Natural killer cell (primary cell): ENCODE measurements at regions of chr19 and their contacts with region 1.

Region 1: GRCh38 chr19:13952154-13953035 is at the start of gene DCAF15:
- DNase-seq: peak; percentile 98 to 99
- ATAC-seq: peak; percentile 94 to 99 (median 95)
- H3K4me3 ChIP-seq: peak within 1 kb of the TSS; percentile 54
- H3K4me3 Mint-ChIP-seq: peak within 1 kb of the TSS; percentile 98
- H3K27ac ChIP-seq: peak within 1 kb of the TSS; percentile 51
- H3K27ac Mint-ChIP-seq: peak within 1 kb of the TSS; percentile 95 to 97
- H3K4me1 ChIP-seq: peaks cover 24% of the 10 kb centered on the region
- H3K4me1 Mint-ChIP-seq: peaks cover 7 to 27% of the 10 kb centered on the region in 2 donors
- H3K27me3 ChIP-seq: no peaks in the 10 kb centered on the region
- H3K27me3 Mint-ChIP-seq: no peaks in the 10 kb centered on the region
- CTCF ChIP-seq: no peak
- total RNA-seq, gene DCAF15: 121 to 149 (median 124) TPM

Region 2: DNA sequence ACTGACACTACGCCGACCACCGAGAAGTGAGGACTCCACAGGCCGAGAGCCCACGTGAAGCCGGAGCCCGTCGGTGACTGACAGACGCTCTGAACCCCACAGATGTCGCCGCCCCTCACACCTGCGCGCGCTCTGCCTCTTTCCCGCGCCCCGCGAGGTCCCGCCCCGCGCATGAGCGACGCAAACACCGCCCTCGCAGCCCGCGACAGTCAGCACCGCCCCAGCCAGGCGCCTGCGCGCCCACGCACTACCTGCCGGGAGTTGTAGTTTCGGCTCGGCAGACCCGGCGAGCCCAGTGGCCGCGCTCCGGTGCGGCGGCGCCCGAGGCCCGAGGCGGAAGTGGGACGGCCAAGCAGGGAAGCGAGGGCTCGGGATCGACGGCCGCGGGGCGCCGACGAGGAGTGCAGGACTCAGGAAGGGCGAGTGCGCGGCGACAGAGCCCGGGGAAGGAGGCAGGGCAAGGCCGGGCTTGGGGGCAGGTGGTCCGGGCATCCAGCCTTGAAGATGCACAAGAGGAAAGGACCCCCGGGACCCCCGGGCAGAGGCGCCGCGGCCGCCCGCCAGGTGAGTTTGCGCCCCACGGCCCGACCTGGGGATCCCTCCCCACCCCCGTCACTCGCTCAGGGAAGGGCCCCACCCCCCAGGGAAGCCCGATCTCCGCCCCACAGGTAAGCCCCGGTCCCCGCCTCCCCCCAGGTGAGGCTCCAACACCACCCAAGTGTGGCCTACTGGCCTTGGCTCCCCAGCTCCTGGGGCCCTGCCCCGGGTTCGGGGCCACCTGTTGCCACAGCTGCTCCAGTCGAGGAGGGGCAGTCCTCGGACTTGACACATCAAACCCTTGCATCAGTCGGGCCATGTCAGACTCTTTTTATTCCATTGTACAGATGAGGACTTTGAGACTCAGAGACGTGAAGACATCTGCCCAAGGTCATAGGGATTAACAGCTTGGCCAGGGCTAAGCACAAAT is 46.2 kb before region 1 on chr19 and contains the starts of genes BRME1 and CC2D1A:
- intact Hi-C with region 1: loop called (anchors 2 kb)
- DNase-seq: peak; percentile 91 to 96
- ATAC-seq: peak; percentile 99
- H3K4me3 ChIP-seq: peak within 1 kb of the TSS; percentile 79
- H3K4me3 Mint-ChIP-seq: peak within 1 kb of the TSS; percentile 92
- H3K27ac ChIP-seq: peak within 1 kb of the TSS; percentile 65
- H3K27ac Mint-ChIP-seq: peak within 1 kb of the TSS; percentile 83 to 95
- H3K4me1 ChIP-seq: peaks cover 23% of the 10 kb centered on the region
- H3K4me1 Mint-ChIP-seq: peaks cover 13 to 15% of the 10 kb centered on the region in 2 donors
- H3K27me3 ChIP-seq: no peaks in the 10 kb centered on the region
- H3K27me3 Mint-ChIP-seq: no peaks in the 10 kb centered on the region
- CTCF ChIP-seq: no peak
- total RNA-seq, gene BRME1: 3.8 to 7.7 (median 4.0) TPM
- total RNA-seq, gene CC2D1A: 42.8 to 49.3 (median 48.4) TPM

Region 3: DNA sequence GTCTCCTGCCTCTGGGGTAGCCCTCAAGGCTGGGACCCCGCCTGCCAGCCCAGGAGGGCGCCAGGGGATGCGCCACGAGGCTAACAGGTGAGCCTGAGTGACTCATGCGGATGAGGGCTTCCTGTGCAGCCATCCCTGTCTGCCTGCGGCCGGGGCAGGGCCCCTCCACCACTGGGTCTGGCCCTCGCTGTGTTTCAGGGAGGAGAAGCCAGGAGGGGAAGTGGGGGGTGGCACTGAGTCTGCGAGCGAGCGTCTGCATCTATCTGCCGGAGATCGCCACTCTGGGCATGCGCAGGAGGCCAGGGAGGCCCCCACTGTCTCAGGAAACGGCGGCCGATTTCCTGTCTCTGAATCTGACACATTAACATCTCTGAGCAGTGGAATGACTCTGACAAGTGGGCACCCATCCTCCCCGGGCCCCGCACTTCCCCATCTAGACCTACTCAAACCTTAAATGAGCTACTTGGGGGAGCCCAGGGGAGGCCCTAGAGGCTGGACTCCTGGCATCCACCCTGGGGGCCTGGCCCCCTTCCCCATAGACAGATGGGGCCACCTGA is 34.0 kb after region 1 on chr19:
- intact Hi-C with region 1: loop called (anchors 2 kb)
- DNase-seq: peak; percentile 96 to 99
- ATAC-seq: peak; percentile 86 to 95 (median 87)
- H3K4me3 ChIP-seq: peak overlapping the region; percentile 17
- H3K4me3 Mint-ChIP-seq: peak overlapping the region; percentile 79
- H3K27ac ChIP-seq: peak overlapping the region; percentile 100
- H3K27ac Mint-ChIP-seq: peak overlapping the region; percentile 97 to 98
- H3K4me1 ChIP-seq: peaks cover 59% of the 10 kb centered on the region
- H3K4me1 Mint-ChIP-seq: peaks cover 29 to 49% of the 10 kb centered on the region in 2 donors
- H3K27me3 ChIP-seq: no peaks in the 10 kb centered on the region
- H3K27me3 Mint-ChIP-seq: no peaks in the 10 kb centered on the region
- CTCF ChIP-seq: no peak

Region 4: DNA sequence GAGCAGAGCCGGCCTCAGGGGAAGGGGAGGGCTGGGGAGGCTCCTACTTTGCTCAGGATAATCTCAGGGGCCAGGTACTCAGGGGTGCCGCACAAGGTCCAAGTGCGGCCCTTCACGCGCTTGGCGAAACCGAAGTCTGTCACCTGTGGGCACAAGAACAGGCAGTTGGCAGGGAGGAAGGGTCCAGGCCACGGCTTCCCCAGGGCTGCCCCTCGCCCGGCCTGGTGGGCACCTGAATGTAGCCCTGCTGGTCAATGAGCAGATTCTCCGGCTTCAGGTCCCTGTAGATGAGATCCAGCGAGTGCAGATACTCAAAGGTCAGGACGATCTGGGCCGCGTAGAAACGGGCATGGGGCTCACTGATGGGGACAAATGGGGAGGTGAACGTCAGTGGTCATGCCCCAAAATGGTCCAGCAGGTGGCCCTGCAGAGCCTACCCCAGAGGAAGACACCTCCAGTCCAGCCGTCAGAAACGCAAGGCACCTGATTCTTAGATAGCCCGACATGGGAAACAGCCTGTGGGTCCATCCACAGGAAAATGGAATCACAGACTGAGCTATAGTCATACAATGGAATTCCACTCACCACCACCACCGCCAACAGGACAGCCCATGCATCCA is 145.2 kb after region 1 on chr19:
- intact Hi-C with region 1: no loop called
- DNase-seq: no peak
- ATAC-seq: no peak
- H3K4me3 ChIP-seq: no peak overlapping the region
- H3K4me3 Mint-ChIP-seq: no peak overlapping the region
- H3K27ac ChIP-seq: no peak overlapping the region
- H3K27ac Mint-ChIP-seq: no peak overlapping the region
- H3K4me1 ChIP-seq: no peaks in the 10 kb centered on the region
- H3K4me1 Mint-ChIP-seq: no peaks in the 10 kb centered on the region
- H3K27me3 ChIP-seq: no peaks in the 10 kb centered on the region
- H3K27me3 Mint-ChIP-seq: no peaks in the 10 kb centered on the region
- CTCF ChIP-seq: no peak